Left ventricle myocardium inferior (tissue), 1 donor: ENCODE measurements at regions of chr11 and their contacts with region 1.

Region 1: GRCh38 chr11:96389720-96390487 is at the starts of genes CCDC82 and JRKL:
- DNase-seq: peak; percentile 97
- H3K4me3 ChIP-seq: peak within 1 kb of the TSS; percentile 94
- H3K27ac ChIP-seq: peak within 1 kb of the TSS; percentile 94
- H3K4me1 ChIP-seq: peaks cover 37% of the 10 kb centered on the region
- H3K27me3 ChIP-seq: no peaks in the 10 kb centered on the region
- CTCF ChIP-seq: no peak
- total RNA-seq, gene CCDC82: 15.9 TPM
- total RNA-seq, gene JRKL: 6.3 TPM

Region 2: GRCh38 chr11:95835768-95836488 is 554.0 kb before region 1 on chr11:
- intact Hi-C with region 1: loop called (anchors 10 kb)
- DNase-seq: peak; percentile 22
- H3K4me3 ChIP-seq: no peak overlapping the region
- H3K27ac ChIP-seq: peak overlapping the region; percentile 31
- H3K4me1 ChIP-seq: peaks cover 5% of the 10 kb centered on the region
- H3K27me3 ChIP-seq: no peaks in the 10 kb centered on the region
- CTCF ChIP-seq: peak; percentile 88

Region 3: GRCh38 chr11:95943546-95943945 is 446.4 kb before region 1 on chr11:
- intact Hi-C with region 1: no loop called
- DNase-seq: no peak
- H3K4me3 ChIP-seq: no peak overlapping the region
- H3K27ac ChIP-seq: no peak overlapping the region
- H3K4me1 ChIP-seq: no peaks in the 10 kb centered on the region
- H3K27me3 ChIP-seq: no peaks in the 10 kb centered on the region
- CTCF ChIP-seq: no peak

Region 4: DNA sequence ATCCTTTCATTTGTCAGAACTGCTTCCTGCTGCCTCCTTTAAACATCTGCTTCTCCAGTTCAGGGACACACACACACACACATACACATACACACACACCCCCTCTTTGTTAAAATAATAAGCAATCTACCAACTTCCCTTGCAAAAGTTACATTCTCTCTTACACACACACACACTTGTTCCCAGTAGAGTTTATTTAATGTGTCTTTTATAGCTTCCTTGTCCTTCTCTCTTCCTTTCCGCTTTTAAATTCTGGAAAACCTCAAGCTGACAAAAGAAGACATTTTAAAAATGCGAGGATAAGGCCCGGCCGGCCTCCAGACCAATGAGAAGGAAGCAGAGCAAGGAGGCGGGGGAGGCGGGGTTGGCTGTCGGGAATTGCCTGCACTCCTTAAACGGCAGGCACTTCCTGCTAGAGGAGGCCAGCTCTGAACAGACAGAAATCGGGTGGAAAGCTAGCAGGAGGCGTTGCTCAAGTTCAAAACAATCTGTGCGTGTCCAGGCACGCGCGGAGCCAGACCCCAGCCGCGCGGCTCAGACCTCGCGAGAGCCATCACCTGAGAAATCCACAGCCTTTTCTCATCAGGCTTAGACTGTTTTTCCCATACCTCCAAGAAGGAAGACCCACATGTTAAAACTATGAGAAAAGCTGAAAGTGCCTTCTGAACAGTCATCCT is 146.8 kb before region 1 on chr11:
- intact Hi-C with region 1: no loop called
- DNase-seq: peak; percentile 94
- H3K4me3 ChIP-seq: peak overlapping the region; percentile 64
- H3K27ac ChIP-seq: peak overlapping the region; percentile 88
- H3K4me1 ChIP-seq: peaks cover 42% of the 10 kb centered on the region
- H3K27me3 ChIP-seq: no peaks in the 10 kb centered on the region
- CTCF ChIP-seq: no peak